Common myeloid progenitor, CD34-positive (primary cell): ENCODE measurements at regions of chr14 and their contacts with region 1.

Region 1: DNA sequence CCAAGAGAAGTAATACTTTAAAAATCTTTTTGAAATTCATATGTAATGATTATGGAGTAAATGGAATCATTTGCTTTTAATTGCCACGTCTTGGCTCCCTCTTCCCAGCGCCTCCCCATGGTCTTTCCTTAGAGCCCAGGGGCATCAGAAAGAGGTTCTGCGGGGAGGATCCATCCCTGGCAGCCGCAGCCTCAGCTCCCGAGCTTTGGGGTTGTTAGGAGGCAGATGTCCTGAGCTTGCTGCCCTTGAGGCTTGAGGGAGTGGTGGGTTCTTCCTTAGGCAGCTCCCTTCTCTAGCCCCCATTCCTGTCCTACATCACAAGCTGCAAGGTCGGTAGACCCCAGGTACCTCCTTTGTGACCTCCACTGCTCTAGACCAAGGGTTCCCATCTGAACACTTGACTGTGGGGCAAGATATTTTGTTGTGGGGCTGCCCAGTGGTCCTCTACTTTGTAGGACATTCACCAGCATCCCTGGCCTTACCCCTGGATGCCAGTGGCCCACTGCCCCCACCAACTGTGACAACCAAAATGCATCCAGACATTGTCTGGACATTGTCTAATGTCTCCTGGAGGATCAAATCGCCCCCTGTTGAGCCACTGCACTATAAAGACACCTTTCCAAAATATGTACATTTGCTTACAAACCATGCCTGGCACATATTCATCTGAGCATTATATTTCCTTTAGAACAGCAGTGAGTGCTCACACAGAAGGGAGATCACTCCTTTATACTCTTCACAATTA is 6.3 kb downstream of the PPP2R5C start:
- DNase-seq: no peak
- H3K4me3 ChIP-seq: no peak overlapping the region
- H3K27ac ChIP-seq: no peak overlapping the region
- H3K4me1 ChIP-seq: no peaks in the 10 kb centered on the region
- H3K27me3 ChIP-seq: peaks cover 0 to 15% (median 5%) of the 10 kb centered on the region in 5 experiments

Region 2: GRCh38 chr14:101535232-101535631 is 232.6 kb before region 1 on chr14:
- CTCF ChIA-PET with region 1: no interaction called
- POLR2A ChIA-PET with region 1: no interaction called
- DNase-seq: peak; percentile 61 to 89 (median 86)
- H3K4me3 ChIP-seq: no peak overlapping the region
- H3K27ac ChIP-seq: no peak overlapping the region
- H3K4me1 ChIP-seq: peaks cover 0 to 57% (median 29%) of the 10 kb centered on the region in 4 experiments
- H3K27me3 ChIP-seq: no peaks in the 10 kb centered on the region

Region 3: DNA sequence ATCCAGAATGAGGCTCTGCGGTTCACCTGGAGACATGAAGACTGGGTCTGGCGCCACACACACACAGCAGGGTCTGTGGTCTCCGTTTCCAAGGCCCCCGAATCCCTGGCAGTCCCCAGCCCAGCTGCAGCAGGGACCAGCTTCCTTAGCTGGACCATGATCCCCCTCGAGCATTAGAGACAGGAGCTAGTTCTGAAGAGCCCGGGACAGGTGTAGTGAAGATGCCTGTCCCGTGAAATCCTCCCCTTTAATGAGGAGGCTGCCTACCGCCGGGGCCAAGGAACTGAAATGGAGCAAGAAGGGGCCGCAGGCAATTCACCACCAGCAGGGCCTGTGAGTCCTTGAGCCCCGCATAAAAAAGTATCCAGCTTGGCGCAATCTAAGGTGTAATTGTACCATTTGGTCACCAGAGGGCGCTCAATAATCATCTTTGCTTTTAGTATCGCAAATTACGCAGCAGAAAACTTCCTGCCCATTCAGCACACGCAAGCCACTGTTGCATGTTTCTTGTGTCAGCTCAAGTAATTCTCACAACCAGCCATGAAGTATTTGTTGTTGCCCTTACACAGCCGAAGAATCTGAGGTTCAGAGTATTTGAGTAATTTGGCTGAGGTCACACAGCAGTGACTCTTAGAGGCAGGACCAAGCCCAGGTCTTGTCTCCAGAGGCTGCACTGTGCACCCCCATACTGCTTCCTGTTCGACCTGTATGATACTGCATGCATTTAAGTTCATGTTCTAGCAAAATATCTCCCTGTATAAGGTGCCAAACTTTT is 60.5 kb before region 1 on chr14:
- CTCF ChIA-PET with region 1: interaction called, 26 read pairs
- POLR2A ChIA-PET with region 1: no interaction called
- DNase-seq: peak; percentile 88 to 94 (median 91)
- H3K4me3 ChIP-seq: no peak overlapping the region
- H3K27ac ChIP-seq: no peak overlapping the region
- H3K4me1 ChIP-seq: peaks cover 0 to 18% (median 13%) of the 10 kb centered on the region in 4 experiments
- H3K27me3 ChIP-seq: peaks cover 5 to 71% (median 23%) of the 10 kb centered on the region in 5 experiments

Region 4: DNA sequence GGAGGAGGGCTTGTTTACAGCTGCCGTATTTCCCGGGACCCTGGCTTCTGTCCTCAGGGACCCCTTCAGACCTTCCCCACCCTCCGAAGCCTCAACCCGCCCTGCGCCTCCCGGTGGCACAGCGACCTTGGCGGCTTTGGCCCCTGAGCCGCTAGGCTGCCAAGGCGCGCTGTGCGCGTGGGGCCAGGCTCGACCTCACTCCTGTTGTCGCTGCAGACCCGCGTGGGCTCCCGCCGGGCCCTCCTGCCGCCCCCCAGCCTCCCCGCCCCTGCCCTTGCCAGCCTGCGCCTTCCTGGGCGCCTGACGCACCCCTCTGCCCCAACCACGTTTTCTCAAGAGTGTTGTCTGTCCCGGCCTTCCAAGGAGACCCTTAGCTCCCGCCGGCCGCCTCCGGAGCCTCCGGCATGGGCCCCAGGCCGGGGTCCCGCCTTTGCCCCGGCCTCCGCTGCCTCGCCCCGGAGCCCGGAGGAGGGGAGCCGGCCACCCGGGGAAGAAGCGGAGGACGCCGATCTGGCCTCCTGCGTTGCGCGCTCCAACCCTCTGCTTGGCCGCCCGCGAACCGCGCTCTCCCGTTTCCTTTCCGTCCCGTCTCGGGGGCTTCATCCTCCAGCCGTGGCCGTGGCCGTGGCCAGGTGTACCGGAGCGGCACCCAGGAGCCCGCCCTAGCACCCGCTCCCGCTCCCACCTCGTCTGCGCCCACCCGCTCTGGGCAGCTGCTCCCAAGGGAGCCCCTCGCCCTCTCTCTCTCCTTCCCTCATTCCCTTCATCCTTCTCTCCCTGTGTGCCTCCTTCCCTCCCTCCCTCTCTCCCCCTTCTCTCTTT is 13.7 kb after region 1 on chr14:
- CTCF ChIA-PET with region 1: interaction called, 12 read pairs
- POLR2A ChIA-PET with region 1: interaction called, 3 read pairs
- DNase-seq: peak in 2 of 3 donors; percentile 33 to 43
- H3K4me3 ChIP-seq: peak overlapping the region in 6 of 7 experiments; percentile 25 to 74 (median 46)
- H3K27ac ChIP-seq: no peak overlapping the region
- H3K4me1 ChIP-seq: peaks cover 0 to 11% (median 5%) of the 10 kb centered on the region in 4 experiments
- H3K27me3 ChIP-seq: peaks cover 0 to 38% (median 16%) of the 10 kb centered on the region in 5 experiments

Region 5: GRCh38 chr14:101824339-101824727 is 56.5 kb after region 1 on chr14:
- CTCF ChIA-PET with region 1: interaction called, 10 read pairs
- POLR2A ChIA-PET with region 1: interaction called, 4 read pairs
- DNase-seq: peak; percentile 58 to 85 (median 82)
- H3K4me3 ChIP-seq: peak overlapping the region in 3 of 7 experiments; percentile 24 to 63 (median 30)
- H3K27ac ChIP-seq: peak overlapping the region; percentile 95 to 98
- H3K4me1 ChIP-seq: peaks cover 23 to 30% (median 26%) of the 10 kb centered on the region in 4 experiments
- H3K27me3 ChIP-seq: no peaks in the 10 kb centered on the region

Region 6: DNA sequence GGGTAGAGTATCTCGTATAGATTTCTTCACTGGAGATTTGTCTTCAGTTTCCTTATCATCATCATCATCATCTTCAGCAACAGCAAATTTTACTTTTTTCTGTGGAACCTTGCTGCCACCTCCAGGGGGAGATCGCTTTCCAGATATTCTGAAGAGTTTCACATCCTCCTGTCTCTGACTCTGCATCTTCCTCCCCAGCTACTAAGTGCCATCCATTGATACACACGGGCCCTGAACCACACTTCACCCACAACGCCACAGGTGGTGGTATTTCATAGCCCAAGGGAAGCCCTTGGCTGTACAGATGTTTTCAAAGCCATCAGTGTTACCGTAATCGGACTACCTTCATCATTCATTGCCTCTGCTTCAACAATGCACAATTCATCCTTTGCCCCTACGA is 75.9 kb after region 1 on chr14:
- CTCF ChIA-PET with region 1: interaction called, 65 read pairs
- POLR2A ChIA-PET with region 1: no interaction called
- DNase-seq: peak; percentile 88 to 94 (median 91)
- H3K4me3 ChIP-seq: no peak overlapping the region
- H3K27ac ChIP-seq: no peak overlapping the region
- H3K4me1 ChIP-seq: peaks cover 0 to 8% (median 4%) of the 10 kb centered on the region in 4 experiments
- H3K27me3 ChIP-seq: no peaks in the 10 kb centered on the region

Region 7: DNA sequence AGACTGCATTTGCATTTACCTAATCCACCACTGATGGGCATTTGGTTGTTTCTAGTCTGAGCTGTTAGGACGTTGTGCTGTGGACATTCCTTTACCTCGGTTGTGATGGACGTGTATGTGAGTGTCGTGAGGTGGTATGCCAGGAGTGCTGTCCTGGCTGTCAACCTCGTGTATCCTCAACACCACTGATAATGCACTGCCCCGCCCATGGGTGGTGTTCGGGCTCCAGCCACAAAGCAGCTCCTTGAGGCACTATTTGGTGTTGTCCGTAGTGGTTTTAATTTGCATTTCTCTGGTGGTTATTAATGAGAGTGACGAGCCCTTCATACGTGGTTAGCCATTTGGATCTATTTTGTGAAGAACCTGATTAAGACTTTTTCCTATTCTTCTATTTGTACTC is 81.3 kb after region 1 on chr14:
- CTCF ChIA-PET with region 1: interaction called, 65 read pairs
- POLR2A ChIA-PET with region 1: interaction called, 3 read pairs
- DNase-seq: no peak
- H3K4me3 ChIP-seq: no peak overlapping the region
- H3K27ac ChIP-seq: no peak overlapping the region
- H3K4me1 ChIP-seq: peaks cover 9 to 26% (median 23%) of the 10 kb centered on the region in 4 experiments
- H3K27me3 ChIP-seq: no peaks in the 10 kb centered on the region

Region 8: DNA sequence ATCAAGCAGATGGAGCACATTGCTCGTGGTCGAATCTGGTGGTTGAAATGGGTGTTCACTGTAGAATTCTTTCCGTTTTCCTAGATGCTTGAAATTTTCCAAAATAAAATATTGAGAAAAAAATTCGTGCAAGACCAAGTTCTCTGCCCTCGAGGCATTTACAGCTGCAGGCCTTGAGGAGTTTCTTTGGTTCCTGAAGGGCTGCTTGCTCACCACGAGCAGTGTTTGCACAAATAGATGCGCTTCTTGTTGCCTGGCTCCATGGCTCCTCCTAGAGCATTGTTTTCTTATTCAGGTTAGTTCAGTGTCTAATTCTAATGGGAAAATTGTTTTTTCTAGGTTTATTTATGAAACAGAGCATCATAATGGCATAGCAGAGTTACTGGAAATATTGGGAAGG is 122.1 kb after region 1 on chr14:
- CTCF ChIA-PET with region 1: interaction called, 23 read pairs
- POLR2A ChIA-PET with region 1: no interaction called
- DNase-seq: peak; percentile 60 to 77 (median 74)
- H3K4me3 ChIP-seq: no peak overlapping the region
- H3K27ac ChIP-seq: no peak overlapping the region
- H3K4me1 ChIP-seq: no peaks in the 10 kb centered on the region
- H3K27me3 ChIP-seq: no peaks in the 10 kb centered on the region

Region 9: DNA sequence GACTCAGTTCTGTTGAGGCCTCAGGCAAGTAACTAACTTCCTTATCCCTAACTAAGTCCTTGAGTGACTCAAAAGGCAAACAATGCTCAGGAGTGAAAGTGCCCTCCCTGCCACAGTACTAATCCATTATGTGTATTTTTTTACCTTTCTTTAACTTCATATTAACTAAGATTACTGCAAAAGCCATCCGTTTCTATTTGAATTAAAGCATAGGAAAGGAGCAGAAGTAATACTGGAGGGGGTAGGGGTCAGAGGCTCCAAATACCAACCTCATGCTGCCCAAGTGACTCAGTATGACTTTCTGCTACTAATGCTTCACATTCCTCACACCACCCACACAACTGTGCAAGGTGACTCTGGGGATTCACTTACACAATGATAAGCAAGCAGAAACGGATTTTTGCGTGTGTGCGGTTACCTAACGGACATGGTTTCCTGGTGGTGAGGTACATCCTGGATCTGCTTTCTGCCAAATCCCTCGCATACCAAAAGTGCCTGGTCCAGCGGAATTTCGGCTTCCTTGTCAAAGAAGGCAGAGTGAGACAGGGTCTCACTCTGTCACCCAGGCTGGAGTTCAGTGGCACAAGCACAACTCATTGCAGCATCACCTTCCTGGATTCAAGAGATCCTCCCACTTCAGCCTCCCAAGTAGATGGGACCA is 512.0 kb after region 1 on chr14:
- CTCF ChIA-PET with region 1: no interaction called
- POLR2A ChIA-PET with region 1: no interaction called
- DNase-seq: no peak
- H3K4me3 ChIP-seq: no peak overlapping the region
- H3K27ac ChIP-seq: no peak overlapping the region
- H3K4me1 ChIP-seq: peaks cover 0 to 10% (median 0%) of the 10 kb centered on the region in 4 experiments
- H3K27me3 ChIP-seq: no peaks in the 10 kb centered on the region